CD4-positive, alpha-beta T cell (primary cell): ENCODE measurements at regions of chr18 and their contacts with region 1.

Region 1: DNA sequence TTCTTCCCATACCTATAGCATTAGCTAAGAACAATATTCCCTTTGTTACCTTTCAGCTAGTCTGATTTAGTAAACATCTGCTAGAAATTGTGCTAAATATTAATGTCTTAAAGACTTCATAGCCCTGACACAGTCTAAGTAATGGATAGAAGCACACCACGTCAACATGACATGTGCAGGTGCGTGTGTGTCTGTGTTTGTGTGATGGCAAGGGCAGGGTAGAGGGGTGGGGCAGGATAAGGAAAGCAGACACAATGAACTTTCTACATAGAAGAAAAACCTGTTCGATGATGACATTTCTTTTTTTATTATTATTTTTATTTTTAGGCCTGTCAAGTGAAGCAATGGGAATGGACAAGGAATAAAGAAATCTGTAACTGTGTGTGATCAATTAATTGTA is 223.3 kb downstream of the NOL4 start:
- DNase-seq: no peak
- ATAC-seq: no peak
- H3K4me3 ChIP-seq: no peak overlapping the region
- H3K4me3 Mint-ChIP-seq: no peak overlapping the region
- H3K27ac ChIP-seq: no peak overlapping the region
- H3K27ac Mint-ChIP-seq: no peak overlapping the region
- H3K4me1 ChIP-seq: no peaks in the 10 kb centered on the region
- H3K4me1 Mint-ChIP-seq: no peaks in the 10 kb centered on the region
- H3K27me3 ChIP-seq: no peaks in the 10 kb centered on the region
- H3K27me3 Mint-ChIP-seq: no peaks in the 10 kb centered on the region
- CTCF ChIP-seq: no peak

Region 2: DNA sequence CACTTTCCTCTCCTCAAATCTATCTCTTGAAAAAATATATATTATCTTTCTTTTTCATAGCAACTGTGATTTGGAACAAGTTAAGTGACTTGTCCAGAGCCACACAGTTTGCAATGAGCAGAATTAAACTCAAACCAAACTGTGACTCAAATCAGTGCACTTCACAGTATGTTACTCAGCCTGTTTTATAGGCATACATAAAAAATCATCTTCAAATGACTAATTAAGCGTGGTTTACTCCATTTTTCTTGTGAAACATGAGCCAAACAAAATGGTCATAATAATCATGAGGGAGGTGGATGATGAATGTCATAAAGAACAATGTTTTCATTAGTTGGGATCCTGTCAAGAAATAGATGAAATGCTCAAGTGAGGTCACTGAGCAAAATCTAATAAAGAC is 554.8 kb before region 1 on chr18:
- CTCF ChIA-PET with region 1: no interaction called
- POLR2A ChIA-PET with region 1: no interaction called
- intact Hi-C with region 1: loop called in 1 of 2 experiments (anchors 5 kb)
- DNase-seq: no peak
- ATAC-seq: no peak
- H3K4me3 ChIP-seq: no peak overlapping the region
- H3K4me3 Mint-ChIP-seq: no peak overlapping the region
- H3K27ac ChIP-seq: no peak overlapping the region
- H3K27ac Mint-ChIP-seq: no peak overlapping the region
- H3K4me1 ChIP-seq: no peaks in the 10 kb centered on the region
- H3K4me1 Mint-ChIP-seq: no peaks in the 10 kb centered on the region
- H3K27me3 ChIP-seq: no peaks in the 10 kb centered on the region
- H3K27me3 Mint-ChIP-seq: peaks cover 9% of the 10 kb centered on the region
- CTCF ChIP-seq: no peak

Region 3: DNA sequence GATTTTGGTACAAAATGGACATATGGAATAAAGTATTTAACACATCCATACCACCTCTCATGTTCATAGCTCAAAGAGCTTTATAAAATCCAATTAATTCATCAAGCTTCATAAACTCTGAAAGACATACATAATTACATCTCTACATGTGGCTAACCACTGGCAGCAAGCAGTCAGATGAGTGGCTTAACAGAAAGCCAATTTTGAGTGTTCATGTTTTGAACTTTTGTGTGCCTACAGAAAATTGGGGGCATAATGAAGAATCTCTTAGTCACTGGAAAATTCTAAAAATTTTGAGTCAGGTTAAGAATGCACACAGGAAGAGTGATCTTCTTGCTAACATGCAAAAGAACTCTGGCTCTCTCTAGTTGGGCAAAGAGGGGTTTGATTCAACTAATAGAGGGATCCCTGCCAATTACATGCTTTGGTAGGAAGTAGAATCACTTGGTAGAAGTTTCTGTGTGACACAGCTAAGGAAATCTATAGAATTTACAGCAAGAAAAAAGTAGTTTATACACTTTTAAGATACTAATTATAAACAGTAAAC is 64.0 kb before region 1 on chr18:
- CTCF ChIA-PET with region 1: no interaction called
- POLR2A ChIA-PET with region 1: no interaction called
- intact Hi-C with region 1: no loop called
- DNase-seq: no peak
- ATAC-seq: no peak
- H3K4me3 ChIP-seq: no peak overlapping the region
- H3K4me3 Mint-ChIP-seq: no peak overlapping the region
- H3K27ac ChIP-seq: no peak overlapping the region
- H3K27ac Mint-ChIP-seq: no peak overlapping the region
- H3K4me1 ChIP-seq: no peaks in the 10 kb centered on the region
- H3K4me1 Mint-ChIP-seq: no peaks in the 10 kb centered on the region
- H3K27me3 ChIP-seq: no peaks in the 10 kb centered on the region
- H3K27me3 Mint-ChIP-seq: no peaks in the 10 kb centered on the region
- CTCF ChIP-seq: no peak